ENCODE measurements at regions of chr1 and their contacts with region 1.

Region 1: GRCh38 chr1:201895913-201896807 is 7.5 kb downstream of the SHISA4 start:
- DNase-seq: peak; percentile 90
- H3K4me3 Mint-ChIP-seq: no peak overlapping the region
- H3K27ac Mint-ChIP-seq: peak overlapping the region; percentile 63
- H3K4me1 Mint-ChIP-seq: peaks cover 19% of the 10 kb centered on the region
- H3K27me3 Mint-ChIP-seq: peaks cover 15% of the 10 kb centered on the region

Region 2: GRCh38 chr1:201660931-201661822 is 235.0 kb before region 1 on chr1:
- CTCF ChIA-PET with region 1: no interaction called
- POLR2A ChIA-PET with region 1: no interaction called
- DNase-seq: no peak
- H3K4me3 Mint-ChIP-seq: no peak overlapping the region
- H3K27ac Mint-ChIP-seq: no peak overlapping the region
- H3K4me1 Mint-ChIP-seq: no peaks in the 10 kb centered on the region
- H3K27me3 Mint-ChIP-seq: peaks cover 6% of the 10 kb centered on the region

Region 3: DNA sequence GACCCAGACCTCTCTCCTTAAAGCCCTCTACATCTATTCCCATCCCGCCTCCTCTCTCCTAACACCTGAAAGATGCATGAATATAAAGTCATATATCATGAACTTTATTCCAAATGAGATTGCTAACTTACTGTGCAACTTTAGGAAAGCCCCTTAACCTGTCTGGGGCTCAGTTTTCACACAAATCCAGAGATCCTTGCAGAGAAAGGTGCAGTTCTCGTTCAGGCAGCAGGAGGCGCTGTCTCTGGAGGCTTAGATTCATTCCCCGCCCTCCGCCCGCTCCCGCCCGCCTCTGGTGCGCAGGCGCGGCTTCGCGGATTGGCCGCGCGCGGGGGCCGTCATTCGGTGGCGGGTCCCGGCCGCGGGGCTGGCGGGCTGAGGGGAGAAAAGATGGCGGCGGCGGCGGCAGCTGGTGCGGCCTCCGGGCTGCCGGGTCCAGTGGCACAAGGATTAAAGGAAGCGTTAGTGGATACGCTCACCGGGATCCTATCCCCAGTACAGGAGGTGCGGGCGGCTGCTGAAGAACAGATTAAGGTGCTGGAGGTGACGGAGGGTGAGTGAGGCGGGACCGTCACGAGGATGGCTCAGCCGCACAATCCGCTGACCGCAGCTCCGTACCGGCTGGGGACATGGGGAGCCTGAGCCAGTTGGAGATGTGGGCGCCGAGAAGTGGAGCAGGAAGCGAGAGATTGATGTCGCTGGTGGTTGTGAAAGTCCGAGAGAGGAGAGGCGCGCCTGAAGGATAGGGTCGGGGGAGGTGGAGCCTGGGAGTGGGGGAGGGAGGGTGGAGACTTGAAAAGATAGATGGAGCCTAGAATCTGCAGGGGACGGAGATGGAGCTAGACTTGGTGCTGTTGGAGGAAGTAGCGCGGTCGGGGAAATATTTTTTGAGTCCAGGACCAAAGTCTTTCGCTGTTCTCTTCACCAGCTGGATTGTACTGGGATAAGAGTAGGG is 67.1 kb before region 1 on chr1 and contains the start of gene IPO9:
- CTCF ChIA-PET with region 1: interaction called, 15 read pairs
- POLR2A ChIA-PET with region 1: interaction called, 3 read pairs
- DNase-seq: peak; percentile 95
- H3K4me3 Mint-ChIP-seq: peak within 1 kb of the TSS; percentile 94
- H3K27ac Mint-ChIP-seq: peak within 1 kb of the TSS; percentile 90
- H3K4me1 Mint-ChIP-seq: peaks cover 40% of the 10 kb centered on the region
- H3K27me3 Mint-ChIP-seq: no peaks in the 10 kb centered on the region
- total RNA-seq, gene IPO9: 44.3 to 49.5 TPM

Region 4: DNA sequence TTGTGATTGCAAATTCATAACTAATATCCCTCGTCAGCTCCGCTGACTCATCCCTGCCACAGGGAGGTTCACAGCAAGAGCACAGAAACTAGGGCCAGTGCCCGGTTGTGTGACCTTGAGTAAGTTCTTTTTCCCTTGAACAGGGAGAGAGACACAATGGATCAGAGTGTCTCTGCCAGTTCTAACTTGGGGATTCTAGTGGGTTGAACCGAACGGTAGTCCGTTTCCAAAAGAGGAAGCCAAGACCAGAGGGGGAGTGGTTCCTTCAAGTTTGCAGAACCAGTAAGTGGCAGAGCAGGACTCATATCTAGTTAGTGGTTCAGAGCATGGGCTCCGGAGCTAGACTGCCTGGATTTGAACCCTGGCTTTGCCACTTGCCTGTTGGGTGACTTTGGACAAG is 12.4 kb before region 1 on chr1:
- CTCF ChIA-PET with region 1: interaction called, 31 read pairs
- POLR2A ChIA-PET with region 1: interaction called, 15 read pairs
- DNase-seq: no peak
- H3K4me3 Mint-ChIP-seq: no peak overlapping the region
- H3K27ac Mint-ChIP-seq: no peak overlapping the region
- H3K4me1 Mint-ChIP-seq: peaks cover 11% of the 10 kb centered on the region
- H3K27me3 Mint-ChIP-seq: peaks cover 22% of the 10 kb centered on the region

Region 5: DNA sequence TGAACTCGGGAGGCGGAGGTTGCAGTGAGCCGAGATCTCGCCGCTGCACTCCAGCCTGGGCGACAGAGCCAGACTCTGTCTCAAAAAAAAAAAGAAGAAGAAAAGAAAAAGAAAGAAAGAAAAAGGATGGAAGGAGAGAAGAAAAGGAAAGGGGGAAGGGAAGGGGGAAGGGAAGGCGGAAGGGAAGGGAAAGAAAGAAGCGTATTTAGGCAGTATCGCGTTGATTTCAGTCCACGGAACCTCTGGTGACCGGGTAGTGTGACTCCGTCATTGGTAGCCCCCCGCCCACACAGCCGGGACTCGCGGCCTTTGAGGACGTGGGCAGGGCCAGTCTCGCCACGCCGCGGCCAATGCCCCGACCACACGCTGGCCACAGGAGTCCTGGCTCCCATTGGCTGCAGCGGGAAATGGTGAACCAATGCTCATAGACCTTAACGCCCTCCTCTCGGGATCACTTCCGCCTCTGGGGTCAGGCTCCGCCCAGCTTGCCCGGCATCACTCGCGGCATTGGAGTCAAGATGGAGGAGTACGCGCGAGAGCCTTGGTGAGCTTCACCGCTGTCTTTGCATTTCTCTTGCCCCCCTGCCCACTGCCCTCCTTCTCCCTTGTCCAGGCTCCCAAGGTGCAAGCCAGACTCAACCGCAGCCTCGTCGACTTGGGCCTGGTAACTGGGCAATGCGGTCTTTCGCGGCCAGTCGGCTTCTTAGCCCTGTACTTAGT is 59.0 kb after region 1 on chr1 and contains the start of gene TIMM17A:
- CTCF ChIA-PET with region 1: interaction called, 23 read pairs
- POLR2A ChIA-PET with region 1: interaction called, 15 read pairs
- DNase-seq: peak; percentile 96
- H3K4me3 Mint-ChIP-seq: peak within 1 kb of the TSS; percentile 95
- H3K27ac Mint-ChIP-seq: peak within 1 kb of the TSS; percentile 93
- H3K4me1 Mint-ChIP-seq: peaks cover 26% of the 10 kb centered on the region
- H3K27me3 Mint-ChIP-seq: no peaks in the 10 kb centered on the region
- total RNA-seq, gene TIMM17A: 42.5 to 44.8 TPM

Region 6: DNA sequence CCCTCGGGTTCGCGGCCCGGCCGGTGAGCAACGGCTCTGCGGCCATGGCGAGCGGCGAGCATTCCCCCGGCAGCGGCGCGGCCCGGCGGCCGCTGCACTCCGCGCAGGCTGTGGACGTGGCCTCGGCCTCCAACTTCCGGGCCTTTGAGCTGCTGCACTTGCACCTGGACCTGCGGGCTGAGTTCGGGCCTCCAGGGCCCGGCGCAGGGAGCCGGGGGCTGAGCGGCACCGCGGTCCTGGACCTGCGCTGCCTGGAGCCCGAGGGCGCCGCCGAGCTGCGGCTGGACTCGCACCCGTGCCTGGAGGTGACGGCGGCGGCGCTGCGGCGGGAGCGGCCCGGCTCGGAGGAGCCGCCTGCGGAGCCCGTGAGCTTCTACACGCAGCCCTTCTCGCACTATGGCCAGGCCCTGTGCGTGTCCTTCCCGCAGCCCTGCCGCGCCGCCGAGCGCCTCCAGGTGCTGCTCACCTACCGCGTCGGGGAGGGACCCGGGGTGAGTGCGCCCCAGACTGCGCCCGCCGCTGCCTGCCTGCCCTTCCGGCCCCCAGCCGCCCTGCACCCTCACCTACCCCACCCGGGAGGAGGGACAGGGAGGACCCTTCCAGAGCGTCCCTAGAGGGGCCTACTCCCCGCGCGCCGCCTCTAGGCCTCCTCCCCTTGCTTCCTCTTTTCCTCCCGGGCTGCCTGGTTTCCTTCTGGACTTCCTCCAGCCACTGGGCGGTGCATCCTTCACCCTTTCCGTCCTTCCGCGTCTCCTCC is 86.6 kb after region 1 on chr1 and contains the start of gene RNPEP:
- CTCF ChIA-PET with region 1: interaction called, 21 read pairs
- POLR2A ChIA-PET with region 1: interaction called, 10 read pairs
- DNase-seq: peak; percentile 57
- H3K4me3 Mint-ChIP-seq: peak within 1 kb of the TSS; percentile 97
- H3K27ac Mint-ChIP-seq: peak within 1 kb of the TSS; percentile 74
- H3K4me1 Mint-ChIP-seq: peaks cover 28% of the 10 kb centered on the region
- H3K27me3 Mint-ChIP-seq: no peaks in the 10 kb centered on the region
- total RNA-seq, gene RNPEP: 38.5 to 41.1 TPM

Region 7: GRCh38 chr1:202135221-202135721 is 239.1 kb after region 1 on chr1:
- CTCF ChIA-PET with region 1: interaction called, 22 read pairs
- POLR2A ChIA-PET with region 1: no interaction called
- DNase-seq: peak; percentile 61
- H3K4me3 Mint-ChIP-seq: no peak overlapping the region
- H3K27ac Mint-ChIP-seq: no peak overlapping the region
- H3K4me1 Mint-ChIP-seq: peaks cover 7% of the 10 kb centered on the region
- H3K27me3 Mint-ChIP-seq: no peaks in the 10 kb centered on the region